Mammary epithelial cell (primary cell): ENCODE measurements at regions of chrX and their contacts with region 1.

Region 1: GRCh38 chrX:110317820-110318658 is at the start of gene AMMECR1:
- DNase-seq: peak; percentile 68
- H3K4me3 ChIP-seq: peak within 1 kb of the TSS; percentile 77 to 84 (median 78)
- H3K27ac ChIP-seq: peak within 1 kb of the TSS; percentile 81
- H3K4me1 ChIP-seq: no peaks in the 10 kb centered on the region
- H3K27me3 ChIP-seq: no peaks in the 10 kb centered on the region
- CTCF ChIP-seq: no peak
- total RNA-seq, gene AMMECR1: 21.0 to 22.7 TPM

Region 2: GRCh38 chrX:110120025-110120424 is 198.0 kb before region 1 on chrX:
- CTCF ChIA-PET with region 1: no interaction called
- dilution Hi-C with region 1: no loop called
- in situ Hi-C with region 1: no loop called
- intact Hi-C with region 1: no loop called
- DNase-seq: no peak
- H3K4me3 ChIP-seq: no peak overlapping the region
- H3K27ac ChIP-seq: no peak overlapping the region
- H3K4me1 ChIP-seq: no peaks in the 10 kb centered on the region
- H3K27me3 ChIP-seq: peaks cover 2% of the 10 kb centered on the region
- CTCF ChIP-seq: no peak

Region 3: GRCh38 chrX:110210417-110211139 is 107.5 kb before region 1 on chrX:
- CTCF ChIA-PET with region 1: interaction called, 16 read pairs
- dilution Hi-C with region 1: no loop called
- in situ Hi-C with region 1: no loop called
- intact Hi-C with region 1: loop called (anchors 2 kb)
- DNase-seq: peak; percentile 84
- H3K4me3 ChIP-seq: no peak overlapping the region
- H3K27ac ChIP-seq: peak overlapping the region; percentile 84
- H3K4me1 ChIP-seq: peaks cover 33% of the 10 kb centered on the region
- H3K27me3 ChIP-seq: no peaks in the 10 kb centered on the region
- CTCF ChIP-seq: no peak

Region 4: DNA sequence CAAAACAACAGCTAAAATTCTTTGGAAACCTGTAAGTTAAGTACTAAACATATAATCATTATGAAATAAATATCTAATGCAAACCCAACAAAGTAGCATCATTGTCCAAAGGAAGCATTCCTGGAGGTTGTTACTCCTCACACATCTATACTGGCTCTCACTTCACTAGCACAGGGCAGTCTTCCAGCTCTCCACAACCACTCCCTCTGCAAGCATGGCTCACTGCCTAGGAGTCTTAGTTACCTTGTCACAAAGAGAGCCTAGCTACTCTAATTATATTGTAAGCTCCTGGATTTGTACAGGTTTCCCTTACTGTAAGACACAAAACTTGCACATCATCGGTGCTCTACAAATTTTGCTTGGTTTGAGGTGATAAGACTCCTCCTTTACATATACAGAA is 76.2 kb before region 1 on chrX:
- CTCF ChIA-PET with region 1: no interaction called
- dilution Hi-C with region 1: no loop called
- in situ Hi-C with region 1: no loop called
- intact Hi-C with region 1: loop called (anchors 5 kb)
- DNase-seq: no peak
- H3K4me3 ChIP-seq: no peak overlapping the region
- H3K27ac ChIP-seq: peak overlapping the region; percentile 84
- H3K4me1 ChIP-seq: peaks cover 13% of the 10 kb centered on the region
- H3K27me3 ChIP-seq: no peaks in the 10 kb centered on the region
- CTCF ChIP-seq: no peak

Region 5: GRCh38 chrX:110402479-110403230 is 84.6 kb after region 1 on chrX:
- CTCF ChIA-PET with region 1: no interaction called
- dilution Hi-C with region 1: no loop called
- in situ Hi-C with region 1: no loop called
- intact Hi-C with region 1: loop called (anchors 1 kb)
- DNase-seq: peak; percentile 79
- H3K4me3 ChIP-seq: no peak overlapping the region
- H3K27ac ChIP-seq: peak overlapping the region; percentile 82
- H3K4me1 ChIP-seq: peaks cover 23% of the 10 kb centered on the region
- H3K27me3 ChIP-seq: no peaks in the 10 kb centered on the region
- CTCF ChIP-seq: no peak

Region 6: GRCh38 chrX:110407910-110408545 is 90.0 kb after region 1 on chrX:
- CTCF ChIA-PET with region 1: no interaction called
- dilution Hi-C with region 1: no loop called
- in situ Hi-C with region 1: no loop called
- intact Hi-C with region 1: loop called (anchors 2 kb)
- DNase-seq: peak; percentile 63
- H3K4me3 ChIP-seq: no peak overlapping the region
- H3K27ac ChIP-seq: no peak overlapping the region
- H3K4me1 ChIP-seq: peaks cover 20% of the 10 kb centered on the region
- H3K27me3 ChIP-seq: no peaks in the 10 kb centered on the region
- CTCF ChIP-seq: peak; percentile 56 to 78